ENCODE measurements at regions of chr1 and their contacts with region 1.

Region 1: DNA sequence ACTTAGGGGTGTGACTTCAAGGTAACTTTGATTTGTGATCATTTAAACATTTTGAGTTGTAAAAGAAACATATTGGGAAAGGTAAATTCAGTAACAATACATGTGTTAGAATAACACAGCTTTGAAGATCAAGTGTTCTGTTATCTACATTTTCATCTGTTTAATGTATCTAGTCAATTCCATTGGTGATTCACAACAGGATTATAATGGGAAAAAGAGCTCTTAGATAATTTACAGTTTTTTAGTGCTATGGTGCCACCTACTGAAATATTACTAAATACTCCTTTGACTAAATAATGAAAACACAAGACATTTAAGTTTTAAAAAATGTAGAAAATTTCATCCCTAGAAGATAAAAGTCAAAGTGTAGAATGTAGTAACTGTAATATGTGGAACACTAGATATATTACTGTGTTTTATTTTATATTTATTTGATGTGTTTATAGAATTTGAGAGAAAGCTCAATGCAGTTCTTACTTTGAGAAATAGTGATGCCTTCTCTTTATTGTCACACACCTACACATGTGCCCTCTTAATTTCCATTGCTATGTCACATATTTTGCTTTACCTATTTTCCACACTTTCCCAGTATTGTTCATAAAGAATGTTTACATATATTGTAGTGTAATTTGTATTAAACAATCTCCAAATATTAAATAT is 47.4 kb downstream of the PTPRC start:
- DNase-seq: peak in 1 of 2 experiments; percentile 30
- ATAC-seq: peak in 1 of 2 experiments; percentile 55; a peak in 1 of 6 replicates
- H3K4me3 ChIP-seq: no peak overlapping the region
- H3K27ac ChIP-seq: no peak overlapping the region
- H3K4me1 ChIP-seq: no peaks in the 10 kb centered on the region
- CTCF ChIP-seq: peak; percentile 59
- EP300 ChIP-seq: no peak
- POLR2A ChIP-seq: no peak
- RAD21 ChIP-seq: peak; percentile 69 to 83

Region 2: DNA sequence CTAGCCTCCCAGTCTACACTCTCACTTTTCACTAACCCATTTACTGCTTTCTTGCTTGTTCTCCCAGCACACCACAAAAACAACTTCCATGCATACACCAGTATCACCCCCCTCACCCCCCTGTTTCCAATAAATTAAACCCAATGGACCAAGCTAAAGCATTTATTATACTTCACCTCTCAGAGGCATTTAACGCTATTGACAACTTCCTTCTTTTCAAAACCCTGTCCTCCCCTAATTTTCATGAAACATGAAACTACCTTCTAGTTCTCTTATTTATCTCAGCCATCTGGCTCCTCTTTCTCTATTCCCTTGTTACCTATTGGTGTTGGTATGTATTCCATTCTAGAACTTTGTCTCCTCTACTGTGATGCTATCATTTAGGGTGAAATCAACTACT is 15.1 kb before region 1 on chr1:
- CTCF ChIA-PET with region 1: interaction called, 12 read pairs
- POLR2A ChIA-PET with region 1: no interaction called
- DNase-seq: no peak
- ATAC-seq: no peak
- H3K4me3 ChIP-seq: no peak overlapping the region
- H3K27ac ChIP-seq: no peak overlapping the region
- H3K4me1 ChIP-seq: peaks cover 20% of the 10 kb centered on the region
- CTCF ChIP-seq: no peak
- EP300 ChIP-seq: no peak
- POLR2A ChIP-seq: no peak
- RAD21 ChIP-seq: no peak

Region 3: DNA sequence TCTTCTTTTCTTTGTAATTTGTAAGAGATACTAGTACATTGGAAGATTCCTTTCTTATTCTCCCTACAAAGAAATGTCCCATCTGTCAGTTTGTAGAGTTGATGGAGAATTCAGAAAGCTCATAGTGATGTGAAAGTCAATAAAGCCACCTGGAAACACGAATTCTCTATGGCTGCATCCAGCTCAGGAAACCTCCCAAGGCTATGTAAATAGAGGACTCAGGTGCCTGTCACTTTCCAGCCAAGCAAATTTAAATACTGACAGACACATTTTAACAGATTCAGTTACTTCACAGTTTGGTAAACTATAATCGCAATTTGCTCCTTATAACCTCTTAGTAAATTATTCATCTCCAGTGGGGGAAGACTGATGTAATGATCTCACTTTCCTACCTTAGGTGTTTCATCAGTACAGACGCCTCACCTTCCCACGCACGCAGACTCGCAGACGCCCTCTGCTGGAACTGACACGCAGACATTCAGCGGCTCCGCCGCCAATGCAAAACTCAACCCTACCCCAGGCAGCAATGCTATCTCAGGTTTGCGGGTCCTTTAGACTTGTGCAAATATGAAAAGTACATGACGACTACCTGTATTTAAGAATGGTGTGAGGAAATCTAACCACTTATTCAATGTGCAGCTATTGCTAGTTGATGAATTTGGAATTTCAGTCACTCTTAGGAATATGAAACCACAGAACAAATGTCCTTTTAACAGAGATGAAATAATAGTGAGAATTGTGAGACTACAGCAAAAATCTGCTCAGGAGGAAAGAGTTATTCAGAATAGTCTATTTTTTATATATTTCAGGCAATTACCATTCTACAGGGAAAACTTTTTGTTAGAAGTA is 13.2 kb after region 1 on chr1:
- CTCF ChIA-PET with region 1: interaction called, 14 read pairs
- POLR2A ChIA-PET with region 1: no interaction called
- DNase-seq: peak; percentile 38 to 55
- ATAC-seq: peak; percentile 87 to 98
- H3K4me3 ChIP-seq: no peak overlapping the region
- H3K27ac ChIP-seq: no peak overlapping the region
- H3K4me1 ChIP-seq: no peaks in the 10 kb centered on the region
- CTCF ChIP-seq: peak; percentile 72
- EP300 ChIP-seq: no peak
- POLR2A ChIP-seq: no peak
- RAD21 ChIP-seq: peak; percentile 53 to 60; a peak in 4 of 5 replicates

Region 4: GRCh38 chr1:198734323-198735008 is 48.3 kb after region 1 on chr1:
- CTCF ChIA-PET with region 1: no interaction called
- POLR2A ChIA-PET with region 1: no interaction called
- DNase-seq: no peak
- ATAC-seq: no peak
- H3K4me3 ChIP-seq: no peak overlapping the region
- H3K27ac ChIP-seq: no peak overlapping the region
- H3K4me1 ChIP-seq: no peaks in the 10 kb centered on the region
- CTCF ChIP-seq: no peak
- EP300 ChIP-seq: no peak
- POLR2A ChIP-seq: no peak
- RAD21 ChIP-seq: no peak